WTC11 (cell line): ENCODE measurements at regions of chr4 and their contacts with region 1.

Region 1: DNA sequence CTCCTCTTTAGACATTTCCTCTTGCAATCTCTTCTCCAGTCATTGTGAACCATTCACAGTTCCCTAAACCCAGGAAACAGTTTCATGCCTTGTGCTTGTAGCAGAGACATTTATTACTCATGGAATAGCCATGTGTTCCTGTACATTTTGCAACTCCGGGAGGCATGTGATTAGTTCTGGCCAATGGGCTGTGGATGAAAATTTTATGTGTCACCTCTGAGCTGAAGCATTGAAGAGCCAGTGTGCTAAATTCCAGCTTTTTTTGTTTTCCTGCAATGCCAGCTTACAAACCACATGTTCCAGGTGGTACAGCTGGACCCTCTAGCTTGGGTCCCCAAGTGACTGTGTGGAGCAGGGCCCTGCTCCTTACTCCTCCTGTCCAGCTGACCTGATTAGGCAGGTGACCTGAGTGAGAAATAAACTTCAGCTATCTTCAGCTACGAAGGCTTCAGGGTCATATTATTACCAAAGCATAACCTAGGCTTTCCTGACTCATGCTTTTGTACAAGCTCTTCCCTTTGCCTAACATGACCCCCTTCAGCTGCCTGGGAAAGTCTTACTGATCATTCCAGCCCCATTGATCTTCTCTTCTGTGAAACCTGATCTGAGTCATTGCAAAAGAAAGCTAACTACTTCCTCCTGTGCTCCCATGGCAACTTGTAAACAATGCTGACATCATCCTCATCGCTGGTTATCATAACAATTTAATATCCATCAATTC is 200.4 kb downstream of the PTTG2 start:
- DNase-seq: no peak
- ATAC-seq: peak; percentile 76
- H3K4me3 Mint-ChIP-seq: no peak overlapping the region
- H3K27ac Mint-ChIP-seq: no peak overlapping the region
- H3K4me1 Mint-ChIP-seq: peaks cover 23% of the 10 kb centered on the region
- H3K27me3 Mint-ChIP-seq: no peaks in the 10 kb centered on the region; the same call in 1 of the 2 replicates
- CTCF ChIP-seq: no peak

Region 2: GRCh38 chr4:38084877-38085711 is 75.6 kb before region 1 on chr4:
- CTCF ChIA-PET with region 1: interaction called, 11 read pairs
- POLR2A ChIA-PET with region 1: interaction called, 3 read pairs
- DNase-seq: no peak
- ATAC-seq: peak; percentile 9; the same call in 1 of the 2 replicates
- H3K4me3 Mint-ChIP-seq: no peak overlapping the region
- H3K27ac Mint-ChIP-seq: no peak overlapping the region
- H3K4me1 Mint-ChIP-seq: peaks cover 53% of the 10 kb centered on the region
- H3K27me3 Mint-ChIP-seq: no peaks in the 10 kb centered on the region
- CTCF ChIP-seq: no peak